ENCODE measurements at regions of chr14 and their contacts with region 1.

Region 1: GRCh38 chr14:104137297-104138097 is 890 bp upstream of the KIF26A start:
- DNase-seq: peak; percentile 71
- H3K4me3 Mint-ChIP-seq: no peak overlapping the region
- H3K27ac Mint-ChIP-seq: no peak overlapping the region
- H3K4me1 Mint-ChIP-seq: no peaks in the 10 kb centered on the region
- H3K27me3 Mint-ChIP-seq: peaks cover 84% of the 10 kb centered on the region
- CTCF ChIP-seq: peak; percentile 72

Region 2: GRCh38 chr14:104563742-104564615 is 426.5 kb after region 1 on chr14:
- CTCF ChIA-PET with region 1: interaction called, 3 read pairs
- intact Hi-C with region 1: loop called (anchors 5 kb)
- DNase-seq: peak; percentile 89
- H3K4me3 Mint-ChIP-seq: no peak overlapping the region
- H3K27ac Mint-ChIP-seq: no peak overlapping the region
- H3K4me1 Mint-ChIP-seq: peaks cover 14% of the 10 kb centered on the region
- H3K27me3 Mint-ChIP-seq: peaks cover 87% of the 10 kb centered on the region
- CTCF ChIP-seq: peak; percentile 84

Region 3: GRCh38 chr14:104639889-104640548 is 502.5 kb after region 1 on chr14:
- CTCF ChIA-PET with region 1: no interaction called
- intact Hi-C with region 1: loop called (anchors 10 kb)
- DNase-seq: peak; percentile 82
- H3K4me3 Mint-ChIP-seq: no peak overlapping the region
- H3K27ac Mint-ChIP-seq: no peak overlapping the region
- H3K4me1 Mint-ChIP-seq: peaks cover 24% of the 10 kb centered on the region
- H3K27me3 Mint-ChIP-seq: peaks cover 74% of the 10 kb centered on the region
- CTCF ChIP-seq: peak; percentile 79

Measured in Calu3 (cell line).